A673 (cell line): ENCODE measurements at regions of chr2 and their contacts with region 1.

Region 1: DNA sequence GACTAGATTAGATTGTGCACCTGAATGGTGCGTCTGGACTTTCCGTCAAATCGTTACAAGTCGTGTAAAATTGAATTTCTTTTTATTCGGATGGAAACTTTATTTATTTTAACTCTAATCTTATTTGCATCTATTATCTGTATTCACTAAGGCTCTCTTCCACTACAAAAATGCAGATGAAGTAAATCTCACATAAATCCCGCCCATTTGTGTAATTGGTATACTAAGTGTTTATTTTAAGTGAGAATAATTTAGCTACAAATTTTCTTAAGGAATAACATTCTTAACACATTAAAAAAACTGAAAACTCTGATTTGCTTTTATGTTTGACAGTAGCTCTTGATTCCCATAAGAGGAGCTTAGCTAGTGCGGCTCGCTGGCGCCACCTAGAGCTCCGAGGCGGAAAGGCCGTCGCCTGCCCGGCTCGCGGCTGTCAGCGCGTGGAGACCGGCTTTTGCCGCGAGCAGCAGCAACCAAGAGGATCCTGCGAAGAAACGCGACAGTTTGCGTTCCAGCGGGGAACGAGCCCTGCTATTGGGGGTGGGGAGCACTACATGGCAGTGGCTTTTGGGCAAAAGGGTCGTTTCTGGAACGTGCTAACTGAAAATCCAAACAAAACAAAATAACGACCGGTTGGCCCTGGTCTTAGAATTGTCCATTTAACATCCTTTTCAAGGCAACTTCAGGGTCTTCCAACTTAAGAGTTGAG is 6.7 kb downstream of the SP9 start:
- DNase-seq: peak; percentile 91
- H3K4me3 ChIP-seq: peak overlapping the region; percentile 41
- H3K27ac ChIP-seq: no peak overlapping the region
- H3K4me1 ChIP-seq: peaks cover 25% of the 10 kb centered on the region
- H3K27me3 ChIP-seq: peaks cover 68% of the 10 kb centered on the region
- CTCF ChIP-seq: peak; percentile 99

Region 2: DNA sequence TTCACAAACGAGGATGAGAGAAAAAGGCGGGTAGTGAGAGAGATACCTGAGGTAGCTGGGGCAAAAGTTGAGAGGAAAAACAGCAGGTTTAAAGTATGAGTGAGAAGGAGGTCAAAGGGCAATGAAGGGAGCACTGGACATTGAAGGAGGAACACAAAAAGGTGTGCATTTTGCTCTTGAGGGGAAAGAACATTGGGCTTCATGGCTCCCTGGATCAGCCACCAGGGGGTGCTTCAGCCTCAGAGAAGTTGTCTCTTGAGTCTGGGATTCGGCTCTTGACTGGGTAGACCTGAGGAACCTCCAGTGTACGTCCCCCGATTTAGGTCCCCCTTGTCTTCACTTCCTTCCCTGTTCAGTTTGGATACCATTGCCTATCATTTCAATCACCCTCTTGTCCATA is 1477.3 kb before region 1 on chr2:
- CTCF ChIA-PET with region 1: no interaction called
- POLR2A ChIA-PET with region 1: no interaction called
- intact Hi-C with region 1: loop called (anchors 10 kb)
- DNase-seq: peak; percentile 56
- H3K4me3 ChIP-seq: no peak overlapping the region
- H3K27ac ChIP-seq: no peak overlapping the region
- H3K4me1 ChIP-seq: no peaks in the 10 kb centered on the region
- H3K27me3 ChIP-seq: peaks cover 41% of the 10 kb centered on the region
- CTCF ChIP-seq: peak; percentile 74

Region 3: GRCh38 chr2:173210270-173211196 is 1130.9 kb before region 1 on chr2:
- CTCF ChIA-PET with region 1: no interaction called
- POLR2A ChIA-PET with region 1: no interaction called
- intact Hi-C with region 1: loop called (anchors 10 kb)
- DNase-seq: peak; percentile 86
- H3K4me3 ChIP-seq: no peak overlapping the region
- H3K27ac ChIP-seq: no peak overlapping the region
- H3K4me1 ChIP-seq: peaks cover 4% of the 10 kb centered on the region
- H3K27me3 ChIP-seq: no peaks in the 10 kb centered on the region
- CTCF ChIP-seq: peak; percentile 92

Region 4: DNA sequence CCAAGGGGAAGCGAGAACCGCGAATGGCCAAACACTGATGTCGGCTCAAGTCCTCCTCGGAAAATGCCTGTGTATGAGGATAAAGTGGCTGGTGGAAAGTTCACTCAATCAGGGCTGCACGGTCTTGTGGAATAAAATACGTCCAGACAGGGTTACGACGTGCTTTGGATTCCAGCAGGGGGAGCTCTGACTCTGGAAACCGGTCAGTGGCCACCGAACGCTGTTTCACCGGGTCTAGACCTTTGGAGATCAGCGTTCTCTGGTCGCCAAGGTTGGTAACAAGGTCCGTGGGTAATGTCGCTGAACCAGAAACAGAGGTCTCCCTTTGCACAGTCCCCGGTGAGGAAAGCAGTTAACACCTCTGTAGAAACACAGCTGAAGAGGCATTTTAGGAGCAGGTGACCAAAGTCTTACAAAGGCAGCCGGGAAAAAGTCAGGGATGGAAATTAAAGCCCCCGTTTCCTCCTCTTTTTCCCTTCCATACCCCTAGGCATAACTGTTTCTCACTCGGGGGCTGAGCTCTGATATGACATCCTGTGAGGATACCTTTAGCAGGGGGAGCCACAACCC is 939.0 kb before region 1 on chr2:
- CTCF ChIA-PET with region 1: interaction called, 8 read pairs
- POLR2A ChIA-PET with region 1: no interaction called
- intact Hi-C with region 1: loop called (anchors 2 kb)
- DNase-seq: peak; percentile 82
- H3K4me3 ChIP-seq: peak overlapping the region; percentile 13
- H3K27ac ChIP-seq: no peak overlapping the region
- H3K4me1 ChIP-seq: peaks cover 10% of the 10 kb centered on the region
- H3K27me3 ChIP-seq: peaks cover 42% of the 10 kb centered on the region
- CTCF ChIP-seq: peak; percentile 91

Region 5: DNA sequence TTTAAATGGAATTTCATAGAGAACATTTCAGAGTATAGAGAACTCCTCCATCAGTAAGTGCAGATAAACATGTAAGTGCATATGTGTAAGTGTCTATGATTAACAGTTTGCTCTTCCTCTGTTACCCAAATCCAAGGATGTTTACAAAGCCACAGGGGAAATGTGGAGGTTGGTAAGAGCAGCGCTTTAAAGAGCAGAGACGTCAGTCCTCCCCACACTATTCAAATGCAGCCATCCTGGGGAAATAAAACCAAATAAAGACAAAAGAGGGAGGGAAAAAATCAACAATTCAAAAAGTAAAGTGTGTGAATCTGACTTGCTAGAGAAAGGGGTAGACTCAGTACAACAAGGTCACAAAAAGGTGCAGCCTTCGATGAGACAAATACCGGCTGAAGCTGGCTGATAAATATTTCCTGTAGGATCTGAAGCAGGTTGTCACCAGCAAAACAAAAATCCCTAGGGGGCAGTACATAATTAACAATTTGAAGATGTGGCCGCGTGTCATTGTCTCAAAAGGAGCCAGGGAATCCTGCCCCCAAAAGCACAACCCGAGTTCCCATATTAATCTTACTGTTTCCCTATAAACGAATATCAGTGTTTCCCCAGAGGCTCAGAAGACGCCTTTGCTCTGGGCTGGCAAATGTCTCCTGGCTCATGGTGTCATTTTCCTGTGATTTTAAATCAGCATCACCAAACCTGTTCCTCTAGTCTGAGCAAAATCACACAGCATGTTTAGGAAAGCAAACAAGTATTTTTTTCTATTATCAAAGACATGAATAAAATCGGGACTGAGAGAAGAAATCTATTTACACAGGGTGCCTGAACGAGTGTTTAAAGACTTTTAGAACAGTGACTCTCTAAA is 770.2 kb before region 1 on chr2:
- CTCF ChIA-PET with region 1: no interaction called
- POLR2A ChIA-PET with region 1: no interaction called
- intact Hi-C with region 1: loop called (anchors 5 kb)
- DNase-seq: peak; percentile 61
- H3K4me3 ChIP-seq: no peak overlapping the region
- H3K27ac ChIP-seq: no peak overlapping the region
- H3K4me1 ChIP-seq: no peaks in the 10 kb centered on the region
- H3K27me3 ChIP-seq: peaks cover 3% of the 10 kb centered on the region
- CTCF ChIP-seq: peak; percentile 40; the same call in 1 of the 2 replicates

Region 6: GRCh38 chr2:173898178-173898668 is 443.2 kb before region 1 on chr2:
- CTCF ChIA-PET with region 1: no interaction called
- POLR2A ChIA-PET with region 1: no interaction called
- intact Hi-C with region 1: loop called (anchors 10 kb)
- DNase-seq: no peak
- H3K4me3 ChIP-seq: no peak overlapping the region
- H3K27ac ChIP-seq: no peak overlapping the region
- H3K4me1 ChIP-seq: no peaks in the 10 kb centered on the region
- H3K27me3 ChIP-seq: no peaks in the 10 kb centered on the region
- CTCF ChIP-seq: no peak

Region 7: DNA sequence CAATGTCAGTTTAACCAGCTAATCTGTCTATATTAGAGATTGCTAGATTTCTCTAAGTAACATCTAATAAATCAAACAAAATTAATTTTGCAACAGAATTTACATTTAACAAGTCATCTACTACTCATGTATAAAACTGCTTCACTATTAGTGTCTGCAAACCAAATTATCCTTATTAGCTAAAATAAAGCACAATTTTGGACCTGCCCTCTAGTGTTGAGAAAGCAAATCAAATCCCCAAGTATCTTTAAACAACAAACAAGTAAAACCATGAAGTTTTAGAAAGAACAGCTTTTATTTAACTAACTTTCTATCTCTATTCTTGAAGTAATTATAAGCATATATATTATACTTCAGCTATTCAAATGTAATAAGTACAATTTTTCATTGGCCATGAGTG is 263.2 kb before region 1 on chr2:
- CTCF ChIA-PET with region 1: no interaction called
- POLR2A ChIA-PET with region 1: no interaction called
- intact Hi-C with region 1: no loop called
- DNase-seq: peak; percentile 17
- H3K4me3 ChIP-seq: no peak overlapping the region
- H3K27ac ChIP-seq: no peak overlapping the region
- H3K4me1 ChIP-seq: no peaks in the 10 kb centered on the region
- H3K27me3 ChIP-seq: no peaks in the 10 kb centered on the region
- CTCF ChIP-seq: peak; percentile 54

Region 8: GRCh38 chr2:174125090-174125489 is 216.3 kb before region 1 on chr2:
- CTCF ChIA-PET with region 1: no interaction called
- POLR2A ChIA-PET with region 1: no interaction called
- intact Hi-C with region 1: no loop called
- DNase-seq: no peak
- H3K4me3 ChIP-seq: no peak overlapping the region
- H3K27ac ChIP-seq: no peak overlapping the region
- H3K4me1 ChIP-seq: peaks cover 35% of the 10 kb centered on the region
- H3K27me3 ChIP-seq: no peaks in the 10 kb centered on the region
- CTCF ChIP-seq: no peak

Region 9: DNA sequence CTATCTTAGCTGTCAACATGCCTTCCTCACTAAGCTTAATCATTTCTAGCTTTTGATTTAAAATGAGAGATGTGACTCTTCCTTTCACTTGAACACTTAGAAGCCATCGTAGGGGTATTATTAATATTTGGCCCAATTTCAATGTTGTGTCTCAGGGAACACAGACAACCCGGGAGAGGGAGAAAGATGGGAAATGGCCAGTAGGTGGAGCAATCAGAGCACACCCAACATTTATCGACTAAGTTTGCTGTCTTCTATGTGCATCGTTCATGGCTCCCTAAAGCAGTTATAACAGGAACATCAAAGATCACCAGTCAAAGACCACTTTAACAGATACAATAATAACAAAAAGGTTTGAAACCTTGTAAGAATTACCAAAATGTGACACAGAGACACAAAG is 203.3 kb before region 1 on chr2:
- CTCF ChIA-PET with region 1: no interaction called
- POLR2A ChIA-PET with region 1: no interaction called
- intact Hi-C with region 1: no loop called
- DNase-seq: peak; percentile 45
- H3K4me3 ChIP-seq: no peak overlapping the region
- H3K27ac ChIP-seq: no peak overlapping the region
- H3K4me1 ChIP-seq: no peaks in the 10 kb centered on the region
- H3K27me3 ChIP-seq: no peaks in the 10 kb centered on the region
- CTCF ChIP-seq: peak; percentile 58

Region 10: DNA sequence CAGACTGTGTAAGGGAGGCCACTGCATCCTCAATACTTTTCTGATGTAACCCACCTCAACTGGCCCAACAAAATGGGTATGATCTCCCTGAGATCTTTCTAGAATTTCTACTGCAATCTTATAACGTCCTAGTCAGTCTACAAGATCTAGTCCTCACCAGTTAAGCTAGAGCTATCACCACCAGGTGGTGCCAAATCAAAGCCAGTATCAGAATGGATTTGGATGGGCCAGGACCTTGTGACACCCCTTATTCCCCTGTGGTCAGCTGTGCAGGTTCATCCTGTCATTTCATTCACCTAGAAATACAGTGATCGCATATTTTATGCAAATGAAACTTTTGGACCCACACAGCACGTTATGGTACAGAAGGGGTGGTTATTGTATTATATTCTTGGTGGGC is 183.4 kb before region 1 on chr2:
- CTCF ChIA-PET with region 1: interaction called, 6 read pairs
- POLR2A ChIA-PET with region 1: no interaction called
- intact Hi-C with region 1: loop called (anchors 2 kb)
- DNase-seq: peak; percentile 58
- H3K4me3 ChIP-seq: no peak overlapping the region
- H3K27ac ChIP-seq: no peak overlapping the region
- H3K4me1 ChIP-seq: no peaks in the 10 kb centered on the region
- H3K27me3 ChIP-seq: no peaks in the 10 kb centered on the region
- CTCF ChIP-seq: peak; percentile 71